Sigmoid colon (tissue), 7 donors: ENCODE measurements at regions of chr21 and their contacts with region 1.

Region 1: GRCh38 chr21:27837936-27838335 is 871.0 kb upstream of the ADAMTS5 start:
- DNase-seq: no peak
- H3K4me3 ChIP-seq: no peak overlapping the region
- H3K27ac ChIP-seq: peak overlapping the region in 3 of 4 donors; percentile 1 to 22 (median 16)
- H3K4me1 ChIP-seq: peaks cover 0 to 40% (median 17%) of the 10 kb centered on the region in 4 donors
- H3K27me3 ChIP-seq: no peaks in the 10 kb centered on the region
- CTCF ChIP-seq: no peak
- EP300 ChIP-seq: no peak
- POLR2A ChIP-seq: no peak

Region 2: GRCh38 chr21:27715131-27715530 is 122.8 kb before region 1 on chr21:
- intact Hi-C with region 1: loop called (anchors 5 kb)
- DNase-seq: no peak
- H3K4me3 ChIP-seq: no peak overlapping the region
- H3K27ac ChIP-seq: no peak overlapping the region
- H3K4me1 ChIP-seq: peaks cover 0 to 28% (median 15%) of the 10 kb centered on the region in 4 donors
- H3K27me3 ChIP-seq: no peaks in the 10 kb centered on the region
- CTCF ChIP-seq: no peak
- EP300 ChIP-seq: no peak
- POLR2A ChIP-seq: no peak

Region 3: DNA sequence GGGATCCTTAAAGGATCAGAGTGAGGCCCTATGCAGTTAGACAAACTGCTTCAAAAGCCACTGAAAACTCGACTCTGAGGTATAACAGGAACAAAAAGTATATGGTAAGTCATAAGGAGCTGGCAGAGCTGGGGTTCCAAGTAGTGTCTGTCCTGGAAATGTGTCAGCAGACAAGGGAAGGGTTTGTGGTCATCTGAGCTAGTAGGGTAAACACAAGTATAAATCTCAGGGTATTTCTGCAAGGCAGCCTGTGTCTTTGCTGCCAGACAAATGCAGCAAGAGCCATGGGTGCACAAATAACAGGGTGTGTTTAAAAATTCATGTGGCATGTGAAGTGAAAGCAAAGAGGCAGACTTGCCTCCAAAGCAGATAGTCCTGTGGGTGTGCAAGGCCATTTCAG is 112.0 kb before region 1 on chr21:
- intact Hi-C with region 1: loop called (anchors 5 kb)
- DNase-seq: peak; percentile 77
- H3K4me3 ChIP-seq: no peak overlapping the region
- H3K27ac ChIP-seq: peak overlapping the region in 3 of 4 donors; percentile 56 to 70 (median 61)
- H3K4me1 ChIP-seq: peaks cover 0 to 25% (median 18%) of the 10 kb centered on the region in 4 donors
- H3K27me3 ChIP-seq: no peaks in the 10 kb centered on the region
- CTCF ChIP-seq: no peak
- EP300 ChIP-seq: peak; percentile 29 to 90 (median 54)
- POLR2A ChIP-seq: no peak